Activated B cell treated with CpG ODN at 0.5 μM for 24 hours (primary cell): ENCODE measurements at regions of chr7 and their contacts with region 1.

Region 1: DNA sequence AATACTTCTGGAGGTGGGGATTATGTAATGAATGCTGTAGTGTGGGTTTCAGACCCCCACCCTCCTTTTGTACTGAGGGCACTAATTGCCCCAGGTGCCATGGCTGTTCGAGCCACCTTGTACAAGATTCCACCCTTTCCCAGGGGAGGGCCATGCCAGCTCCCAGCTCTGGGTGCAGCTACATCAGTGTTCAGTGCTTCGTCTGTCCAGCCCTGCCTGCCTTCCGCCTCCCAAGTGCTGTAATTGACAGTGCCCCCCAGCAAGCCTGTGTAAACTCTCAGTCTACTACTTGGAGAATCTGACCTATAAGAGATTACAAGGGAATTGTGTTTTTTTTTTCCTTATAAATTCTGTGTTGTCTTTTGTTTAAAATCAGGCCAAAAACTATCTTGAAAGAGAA is 33.0 kb downstream of the GTF2I start:
- DNase-seq: no peak
- ATAC-seq: no peak
- H3K4me3 Mint-ChIP-seq: no peak overlapping the region
- H3K27ac Mint-ChIP-seq: no peak overlapping the region
- H3K4me1 Mint-ChIP-seq: peaks cover 14% of the 10 kb centered on the region
- H3K27me3 Mint-ChIP-seq: no peaks in the 10 kb centered on the region
- CTCF ChIP-seq: no peak

Region 2: DNA sequence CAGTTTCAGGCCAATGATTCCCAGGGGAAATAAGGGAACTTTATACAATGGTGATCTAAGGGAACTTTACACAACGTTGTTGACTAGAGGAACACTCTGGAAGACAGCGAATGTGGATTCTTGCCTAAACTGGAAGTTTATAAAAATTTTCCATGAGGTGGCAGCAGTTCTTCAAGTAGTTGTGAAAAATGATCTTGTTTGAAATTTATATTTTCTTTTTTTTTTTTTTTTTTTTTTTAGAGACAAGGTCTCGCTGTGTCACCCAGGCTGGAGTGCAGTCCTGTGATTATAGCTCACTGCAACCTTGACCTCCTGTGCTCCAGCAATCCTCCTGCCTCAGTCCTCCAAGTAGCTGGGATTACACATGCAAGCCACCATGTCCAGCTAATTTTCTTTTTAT is 65.0 kb before region 1 on chr7:
- CTCF ChIA-PET with region 1: no interaction called
- POLR2A ChIA-PET with region 1: no interaction called
- intact Hi-C with region 1: loop called (anchors 2 kb)
- DNase-seq: no peak
- ATAC-seq: peak; percentile 42
- H3K4me3 Mint-ChIP-seq: no peak overlapping the region
- H3K27ac Mint-ChIP-seq: no peak overlapping the region
- H3K4me1 Mint-ChIP-seq: peaks cover 3% of the 10 kb centered on the region
- H3K27me3 Mint-ChIP-seq: no peaks in the 10 kb centered on the region
- CTCF ChIP-seq: no peak